ENCODE measurements at regions of chr1 and their contacts with region 1.

Region 1: DNA sequence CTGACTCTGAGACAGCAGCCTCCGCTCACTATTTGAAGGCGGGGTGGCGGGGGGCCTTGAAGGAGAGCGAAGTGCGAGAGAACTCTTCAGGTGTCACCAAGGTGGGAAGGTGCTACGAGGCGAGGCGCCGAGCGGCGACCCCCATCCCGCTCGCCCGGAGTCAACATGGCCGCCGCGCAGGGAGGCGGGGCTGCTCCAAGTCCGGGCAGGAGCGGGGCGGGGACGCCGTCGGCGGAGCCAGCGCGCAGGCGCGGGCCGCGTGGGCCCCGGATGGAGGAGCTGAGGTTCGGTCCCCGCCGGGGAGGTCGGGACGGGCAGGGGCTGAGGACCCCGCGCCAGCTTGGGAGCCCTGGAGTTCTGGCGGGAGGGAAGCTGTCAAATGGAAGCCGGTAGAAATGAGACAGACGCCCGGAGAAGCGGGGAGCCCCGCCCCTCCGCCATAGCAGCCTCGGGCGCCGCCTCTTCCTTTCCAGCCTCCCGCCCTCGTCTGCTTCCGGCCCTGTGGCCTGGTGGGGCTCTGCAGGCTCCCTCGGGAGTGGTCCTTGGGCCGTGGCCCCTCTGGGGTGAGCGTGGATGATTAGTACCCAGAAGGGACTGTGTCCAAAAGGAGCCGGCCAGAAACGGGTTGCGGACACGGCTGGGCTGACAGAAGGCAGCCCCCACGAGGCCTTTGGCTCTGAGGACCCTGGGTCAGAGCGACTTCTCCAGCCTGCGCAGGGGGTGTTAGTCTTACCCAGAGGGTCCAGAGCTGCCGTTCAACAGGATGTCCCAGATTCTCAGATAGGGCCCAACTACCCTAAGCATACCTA is at the start of gene PIGV:
- DNase-seq: peak; percentile 97
- H3K4me3 ChIP-seq: peak within 1 kb of the TSS; percentile 71 to 88
- H3K27ac ChIP-seq: peak within 1 kb of the TSS; percentile 98 to 99
- H3K4me1 ChIP-seq: peaks cover 29 to 34% of the 10 kb centered on the region in 2 experiments
- H3K27me3 ChIP-seq: no peaks in the 10 kb centered on the region
- CTCF ChIP-seq: no peak
- EP300 ChIP-seq: no peak
- RAD21 ChIP-seq: no peak
- polyA plus RNA-seq, gene PIGV: 16.5 and 26.4 TPM in 2 replicates

Region 2: GRCh38 chr1:26500488-26501175 is 287.3 kb before region 1 on chr1:
- CTCF ChIA-PET with region 1: interaction called, 14 read pairs
- POLR2A ChIA-PET with region 1: interaction called, 8 read pairs
- DNase-seq: peak; percentile 97
- H3K4me3 ChIP-seq: peak overlapping the region; percentile 59 to 84
- H3K27ac ChIP-seq: peak overlapping the region; percentile 79 to 81
- H3K4me1 ChIP-seq: no peaks in the 10 kb centered on the region; a peak in 2 of 4 replicates
- H3K27me3 ChIP-seq: no peaks in the 10 kb centered on the region
- CTCF ChIP-seq: no peak; the same call in 1 of the 2 replicates
- EP300 ChIP-seq: no peak
- RAD21 ChIP-seq: no peak

Region 3: DNA sequence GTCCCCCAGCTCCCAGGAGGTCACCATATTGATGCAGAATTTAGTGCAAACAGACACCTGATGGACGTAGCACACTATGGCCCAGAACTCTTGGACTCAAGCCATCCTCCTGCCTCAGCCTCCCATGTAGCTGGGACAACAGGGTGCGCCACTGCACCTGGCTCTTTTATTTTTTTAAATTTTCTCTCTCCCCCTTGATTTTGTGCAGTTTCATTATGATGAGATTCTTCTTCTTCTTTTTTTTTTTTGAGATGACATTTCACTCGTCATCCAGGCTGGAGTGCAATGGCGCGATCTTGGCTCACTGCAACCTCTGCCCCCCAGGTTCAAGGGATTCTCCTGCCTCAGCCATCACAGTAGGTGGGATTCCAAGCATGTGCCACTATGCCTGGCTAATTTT is 194.5 kb before region 1 on chr1:
- CTCF ChIA-PET with region 1: interaction called, 311 read pairs
- POLR2A ChIA-PET with region 1: no interaction called
- DNase-seq: no peak
- H3K4me3 ChIP-seq: no peak overlapping the region
- H3K27ac ChIP-seq: no peak overlapping the region
- H3K4me1 ChIP-seq: no peaks in the 10 kb centered on the region; a peak in 1 of 4 replicates
- H3K27me3 ChIP-seq: no peaks in the 10 kb centered on the region; the same call in 1 of the 2 replicates
- CTCF ChIP-seq: no peak
- EP300 ChIP-seq: no peak
- RAD21 ChIP-seq: no peak

Region 4: GRCh38 chr1:26677306-26678115 is 110.4 kb before region 1 on chr1:
- CTCF ChIA-PET with region 1: interaction called, 13 read pairs
- POLR2A ChIA-PET with region 1: no interaction called
- DNase-seq: peak; percentile 39
- H3K4me3 ChIP-seq: no peak overlapping the region
- H3K27ac ChIP-seq: no peak overlapping the region
- H3K4me1 ChIP-seq: peaks cover 3 to 4% of the 10 kb centered on the region in 2 experiments; a peak in 1 of 4 replicates
- H3K27me3 ChIP-seq: no peaks in the 10 kb centered on the region
- CTCF ChIP-seq: peak; percentile 55
- EP300 ChIP-seq: no peak
- RAD21 ChIP-seq: peak; percentile 55

Region 5: GRCh38 chr1:26700711-26701110 is 87.2 kb before region 1 on chr1:
- CTCF ChIA-PET with region 1: interaction called, 32 read pairs
- POLR2A ChIA-PET with region 1: interaction called, 9 read pairs
- DNase-seq: no peak
- H3K4me3 ChIP-seq: peak overlapping the region in 1 of 2 experiments; percentile 74; a peak in 1 of 4 replicates
- H3K27ac ChIP-seq: peak overlapping the region in 1 of 2 experiments; percentile 9; a peak in 1 of 4 replicates
- H3K4me1 ChIP-seq: peaks cover 33 to 56% of the 10 kb centered on the region in 2 experiments; a peak in 3 of 4 replicates
- H3K27me3 ChIP-seq: no peaks in the 10 kb centered on the region
- CTCF ChIP-seq: no peak
- EP300 ChIP-seq: no peak
- RAD21 ChIP-seq: no peak

Region 6: GRCh38 chr1:26747048-26747447 is 40.9 kb before region 1 on chr1:
- CTCF ChIA-PET with region 1: interaction called, 10 read pairs
- POLR2A ChIA-PET with region 1: no interaction called
- DNase-seq: no peak
- H3K4me3 ChIP-seq: no peak overlapping the region
- H3K27ac ChIP-seq: no peak overlapping the region
- H3K4me1 ChIP-seq: peaks cover 21 to 26% of the 10 kb centered on the region in 2 experiments; a peak in 3 of 4 replicates
- H3K27me3 ChIP-seq: no peaks in the 10 kb centered on the region
- CTCF ChIP-seq: no peak
- EP300 ChIP-seq: no peak
- RAD21 ChIP-seq: no peak

Region 7: DNA sequence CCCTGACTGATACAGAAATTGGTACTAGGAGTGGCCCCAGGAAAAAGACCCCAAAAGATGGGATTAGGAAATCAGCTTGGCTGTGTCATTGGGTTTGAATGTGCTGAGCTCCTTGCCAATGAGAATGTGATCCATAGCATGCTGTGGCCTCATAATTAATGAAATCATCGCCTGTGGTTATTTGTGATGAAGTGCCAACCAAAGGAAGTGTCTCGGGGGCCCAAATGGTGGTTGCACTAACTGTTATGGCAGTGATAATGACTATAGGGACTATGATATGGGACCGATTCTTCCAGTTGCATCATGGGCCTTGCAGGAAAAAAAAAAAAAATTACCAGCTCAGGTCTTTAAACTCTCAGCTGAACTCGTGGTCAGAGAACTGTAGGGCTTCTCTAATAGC is 23.1 kb after region 1 on chr1:
- CTCF ChIA-PET with region 1: interaction called, 23 read pairs
- POLR2A ChIA-PET with region 1: interaction called, 4 read pairs
- DNase-seq: no peak
- H3K4me3 ChIP-seq: no peak overlapping the region
- H3K27ac ChIP-seq: no peak overlapping the region
- H3K4me1 ChIP-seq: no peaks in the 10 kb centered on the region
- H3K27me3 ChIP-seq: no peaks in the 10 kb centered on the region
- CTCF ChIP-seq: no peak
- EP300 ChIP-seq: no peak
- RAD21 ChIP-seq: no peak